Prostate gland (tissue), 2 donors: ENCODE measurements at regions of chr3 and their contacts with region 1.

Region 1: DNA sequence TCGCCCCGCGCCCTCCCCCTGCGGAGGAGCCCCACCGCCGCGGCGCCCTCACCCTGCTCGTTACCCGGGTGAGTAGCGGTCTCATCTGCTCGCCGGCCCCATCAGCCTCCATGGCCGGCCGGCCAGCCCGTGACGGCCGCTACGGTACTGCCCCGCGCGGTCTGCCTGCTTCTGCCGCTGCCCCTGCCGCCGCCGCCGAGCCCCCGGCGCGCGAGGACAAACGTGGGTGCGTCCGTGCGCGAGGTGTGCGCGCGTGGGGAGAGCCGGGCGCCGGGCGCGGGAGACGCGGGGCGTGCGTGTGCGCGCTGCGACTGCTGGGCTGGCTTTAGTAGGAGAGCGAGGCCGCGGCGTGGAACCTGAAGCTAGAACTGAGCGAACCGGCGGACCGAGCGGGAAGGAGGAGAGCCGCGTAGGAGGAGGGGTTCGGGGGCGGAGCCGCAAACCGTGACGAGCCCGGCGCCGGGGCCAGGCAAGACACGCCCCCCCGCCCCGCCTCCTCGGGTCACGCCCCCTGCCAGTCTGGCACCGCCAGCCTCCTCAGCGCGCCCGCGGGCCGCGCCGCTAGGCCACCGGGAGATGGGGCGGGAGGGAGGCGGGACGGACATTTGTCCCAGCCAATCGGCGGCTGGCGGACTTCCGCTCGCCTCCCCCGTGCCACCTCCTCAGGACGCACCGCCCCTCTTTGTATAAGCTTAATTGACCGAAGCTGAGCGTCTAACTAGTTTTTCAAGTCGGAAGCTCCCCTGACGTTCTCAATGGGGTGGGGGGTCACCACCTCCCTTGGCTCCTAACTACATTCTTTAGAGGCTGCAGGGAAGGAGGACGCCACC is at the start of gene SLC4A7:
- DNase-seq: peak; percentile 99
- H3K4me3 ChIP-seq: peak within 1 kb of the TSS; percentile 88 to 89
- H3K27ac ChIP-seq: peak within 1 kb of the TSS; percentile 92 to 96
- H3K4me1 ChIP-seq: no peaks in the 10 kb centered on the region
- H3K27me3 ChIP-seq: no peaks in the 10 kb centered on the region
- CTCF ChIP-seq: peak in 2 of 4 experiments; percentile 11 to 29
- POLR2A ChIP-seq: peak; percentile 98
- total RNA-seq, gene SLC4A7: 23.5 to 31.1 TPM

Region 2: GRCh38 chr3:27254896-27255295 is 229.3 kb before region 1 on chr3:
- intact Hi-C with region 1: no loop called
- DNase-seq: no peak
- H3K4me3 ChIP-seq: no peak overlapping the region
- H3K27ac ChIP-seq: no peak overlapping the region
- H3K4me1 ChIP-seq: no peaks in the 10 kb centered on the region
- H3K27me3 ChIP-seq: no peaks in the 10 kb centered on the region
- CTCF ChIP-seq: no peak
- POLR2A ChIP-seq: no peak

Region 3: DNA sequence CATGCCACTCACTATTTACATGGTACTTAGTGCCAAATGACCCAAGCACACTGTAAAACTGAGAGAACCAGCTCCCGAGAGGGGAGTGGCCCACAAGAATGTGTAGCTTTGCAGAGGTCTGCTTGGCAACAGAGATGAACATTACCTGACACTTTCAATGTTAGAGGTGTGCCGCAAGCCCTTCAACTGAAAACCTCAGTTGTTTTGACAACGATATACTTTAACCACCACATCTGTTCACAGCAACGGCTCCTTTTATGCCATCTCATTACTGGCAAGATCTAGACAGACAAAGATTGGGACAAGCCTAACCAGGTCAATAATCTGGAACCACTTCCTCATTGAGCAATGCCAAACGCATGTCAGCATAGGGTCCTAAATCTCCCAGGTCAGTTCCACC is 138.7 kb before region 1 on chr3:
- intact Hi-C with region 1: no loop called
- DNase-seq: peak; percentile 18
- H3K4me3 ChIP-seq: no peak overlapping the region
- H3K27ac ChIP-seq: no peak overlapping the region
- H3K4me1 ChIP-seq: no peaks in the 10 kb centered on the region
- H3K27me3 ChIP-seq: no peaks in the 10 kb centered on the region
- CTCF ChIP-seq: no peak
- POLR2A ChIP-seq: no peak

Region 4: GRCh38 chr3:27533718-27534573 is 49.7 kb after region 1 on chr3:
- intact Hi-C with region 1: loop called (anchors 5 kb)
- DNase-seq: peak; percentile 5
- H3K4me3 ChIP-seq: no peak overlapping the region
- H3K27ac ChIP-seq: peak overlapping the region; percentile 18 to 28
- H3K4me1 ChIP-seq: no peaks in the 10 kb centered on the region
- H3K27me3 ChIP-seq: no peaks in the 10 kb centered on the region
- CTCF ChIP-seq: no peak
- POLR2A ChIP-seq: no peak

Region 5: GRCh38 chr3:27596334-27596841 is 112.2 kb after region 1 on chr3:
- intact Hi-C with region 1: loop called (anchors 10 kb)
- DNase-seq: no peak
- H3K4me3 ChIP-seq: no peak overlapping the region
- H3K27ac ChIP-seq: no peak overlapping the region
- H3K4me1 ChIP-seq: no peaks in the 10 kb centered on the region
- H3K27me3 ChIP-seq: no peaks in the 10 kb centered on the region
- CTCF ChIP-seq: no peak
- POLR2A ChIP-seq: no peak